ENCODE measurements at regions of chr4 and their contacts with region 1.

Region 1: GRCh38 chr4:54233277-54233696 is 4.2 kb downstream of the PDGFRA start:
- DNase-seq: peak; percentile 40
- ATAC-seq: peak; percentile 90
- H3K4me3 ChIP-seq: peak overlapping the region; percentile 28 to 48
- H3K27ac ChIP-seq: no peak overlapping the region
- H3K4me1 ChIP-seq: peaks cover 0 to 18% of the 10 kb centered on the region in 2 experiments; a peak in 3 of 4 replicates
- H3K27me3 ChIP-seq: no peaks in the 10 kb centered on the region
- CTCF ChIP-seq: peak; percentile 66 to 84 (median 72)
- POLR2A ChIP-seq: no peak
- RAD21 ChIP-seq: peak; percentile 88

Region 2: DNA sequence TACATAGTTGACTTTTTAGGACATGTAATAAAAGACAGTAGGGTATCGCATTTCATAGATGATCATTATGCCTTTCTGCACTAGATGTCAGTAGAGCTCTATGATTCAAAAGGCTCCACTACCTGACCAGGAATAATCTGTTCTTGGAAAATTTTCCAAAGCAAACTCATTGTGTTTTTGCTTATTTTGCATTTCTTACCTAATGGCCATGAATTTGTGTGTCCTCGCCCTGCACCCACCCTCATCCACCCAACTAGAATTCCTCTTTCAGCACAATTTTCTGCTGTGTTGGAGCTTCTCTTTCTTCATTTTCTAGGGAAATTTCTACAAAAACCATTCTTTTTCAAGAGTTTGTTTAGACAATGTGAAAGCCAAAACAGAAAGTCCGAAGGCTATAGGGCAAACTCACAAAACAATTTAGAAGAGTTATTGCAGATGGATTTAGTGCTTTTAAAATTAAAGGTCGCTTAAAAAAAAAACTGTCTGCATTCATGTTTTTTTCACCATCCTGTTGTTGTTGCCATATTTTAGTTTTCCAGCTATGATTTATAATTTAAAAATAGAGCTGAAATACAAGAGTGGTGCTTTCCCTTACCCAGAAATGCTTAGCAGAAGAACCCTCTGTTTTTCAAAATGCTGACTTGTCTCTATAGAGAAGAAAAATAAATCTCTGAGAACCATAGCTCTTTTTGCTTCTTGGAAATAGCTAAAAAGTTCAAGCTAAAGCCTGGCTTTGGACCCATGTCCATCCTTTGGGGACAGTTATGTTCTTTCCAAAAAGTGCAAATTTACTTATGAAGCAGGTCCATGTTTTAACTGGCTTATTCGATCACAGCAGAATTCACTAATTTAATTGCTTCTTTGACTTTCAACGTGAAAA is 1998.5 kb before region 1 on chr4:
- CTCF ChIA-PET with region 1: interaction called, 21 read pairs
- POLR2A ChIA-PET with region 1: no interaction called
- RAD21 ChIA-PET with region 1: interaction called in 1 of 2 experiments, 3 read pairs
- intact Hi-C with region 1: loop called (anchors 2 kb)
- DNase-seq: peak; percentile 41
- ATAC-seq: peak; percentile 89
- H3K4me3 ChIP-seq: no peak overlapping the region
- H3K27ac ChIP-seq: no peak overlapping the region
- H3K4me1 ChIP-seq: peaks cover 0 to 2% of the 10 kb centered on the region in 2 experiments; a peak in 1 of 4 replicates
- H3K27me3 ChIP-seq: peaks cover 19% of the 10 kb centered on the region
- CTCF ChIP-seq: peak; percentile 35 to 66 (median 51); a peak in 4 of 6 replicates
- POLR2A ChIP-seq: no peak
- RAD21 ChIP-seq: peak; percentile 79

Region 3: DNA sequence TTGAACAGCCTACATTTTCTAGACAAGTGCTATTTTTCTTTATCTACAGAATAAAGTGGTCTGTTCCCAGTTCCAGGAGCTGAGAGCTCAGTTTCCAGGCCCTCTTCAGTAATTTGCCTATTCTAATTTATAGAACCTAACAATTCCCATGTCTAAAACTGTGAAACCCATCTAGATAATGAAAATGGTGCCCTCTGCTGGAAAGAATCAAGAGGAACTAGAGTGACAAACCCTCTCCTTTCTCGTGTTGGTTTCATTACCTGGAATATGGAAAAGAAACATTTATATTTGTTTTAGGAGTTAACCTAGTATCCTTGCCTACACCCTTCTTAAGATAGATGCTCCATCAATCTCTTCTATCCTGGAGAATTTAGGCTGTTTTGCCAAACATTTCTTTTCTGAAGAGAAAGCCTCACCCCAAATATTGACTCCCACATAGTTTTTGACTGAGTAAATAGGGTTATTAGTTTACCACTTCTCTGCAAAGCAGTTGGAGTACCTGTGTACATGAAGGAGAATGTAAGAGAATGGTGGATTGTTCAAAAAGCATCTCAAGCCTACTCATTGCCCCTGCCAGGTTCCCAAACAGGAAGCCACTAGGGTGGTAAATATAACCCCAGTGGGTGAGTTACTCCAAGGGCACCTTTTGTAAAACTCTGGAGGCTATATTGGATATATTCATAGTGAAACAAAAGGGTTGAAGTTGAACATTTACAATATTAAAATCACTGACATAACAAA is 1249.6 kb before region 1 on chr4:
- CTCF ChIA-PET with region 1: interaction called, 25 read pairs
- POLR2A ChIA-PET with region 1: no interaction called
- RAD21 ChIA-PET with region 1: no interaction called
- intact Hi-C with region 1: loop called (anchors 10 kb)
- DNase-seq: peak; percentile 50
- ATAC-seq: peak; percentile 81
- H3K4me3 ChIP-seq: no peak overlapping the region
- H3K27ac ChIP-seq: no peak overlapping the region
- H3K4me1 ChIP-seq: peaks cover 2 to 4% of the 10 kb centered on the region in 2 experiments; a peak in 1 of 4 replicates
- H3K27me3 ChIP-seq: no peaks in the 10 kb centered on the region
- CTCF ChIP-seq: peak; percentile 45 to 68 (median 60); a peak in 5 of 6 replicates
- POLR2A ChIP-seq: no peak
- RAD21 ChIP-seq: peak; percentile 69

Region 4: DNA sequence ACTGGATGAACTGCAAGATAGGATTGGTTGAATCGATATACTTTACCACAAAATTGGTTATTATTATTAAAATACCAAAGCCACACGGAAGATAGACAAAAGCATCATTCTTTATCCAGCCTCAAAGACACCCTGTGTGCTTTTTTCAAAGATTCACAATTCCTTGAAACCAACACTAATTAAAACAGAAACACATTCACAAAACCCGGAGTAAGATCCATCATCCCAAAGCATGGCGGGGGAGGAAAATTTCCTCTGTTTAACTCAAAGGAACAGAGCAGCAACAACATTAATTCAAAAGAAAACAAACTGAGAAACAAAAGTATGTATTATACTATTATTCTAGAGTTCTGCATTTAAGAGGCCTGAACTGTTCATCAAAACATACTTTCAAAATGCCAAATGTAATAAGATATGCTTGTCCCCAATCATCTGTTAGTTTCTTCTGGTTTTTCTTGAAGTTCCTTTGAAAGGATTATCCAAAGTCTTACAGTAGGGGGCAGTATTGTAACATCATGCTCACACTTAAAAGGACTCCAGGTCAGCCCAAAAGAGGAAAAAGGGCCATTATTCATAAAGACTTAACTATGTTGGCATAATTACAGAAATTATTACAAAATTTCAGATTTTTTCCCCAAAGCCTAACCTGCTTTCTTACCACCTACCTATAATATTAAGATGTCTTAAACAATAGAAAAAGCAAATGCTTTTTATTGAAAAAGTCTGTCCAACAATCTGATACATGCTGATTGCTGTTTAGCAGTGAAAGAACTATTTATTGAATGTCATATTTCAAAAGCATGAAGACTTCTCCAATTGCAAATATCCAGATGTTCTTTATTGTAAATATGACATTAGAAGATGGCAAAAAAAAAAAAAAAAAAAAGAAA is 1036.2 kb before region 1 on chr4:
- CTCF ChIA-PET with region 1: interaction called, 13 read pairs
- POLR2A ChIA-PET with region 1: no interaction called
- RAD21 ChIA-PET with region 1: interaction called in 1 of 2 experiments, 4 read pairs
- intact Hi-C with region 1: loop called (anchors 1 kb)
- DNase-seq: peak; percentile 70
- ATAC-seq: peak; percentile 76
- H3K4me3 ChIP-seq: no peak overlapping the region
- H3K27ac ChIP-seq: no peak overlapping the region
- H3K4me1 ChIP-seq: no peaks in the 10 kb centered on the region
- H3K27me3 ChIP-seq: no peaks in the 10 kb centered on the region
- CTCF ChIP-seq: peak; percentile 61 to 81 (median 65); a peak in 5 of 6 replicates
- POLR2A ChIP-seq: no peak
- RAD21 ChIP-seq: peak; percentile 81

Region 5: GRCh38 chr4:53490965-53491622 is 742.2 kb before region 1 on chr4:
- CTCF ChIA-PET with region 1: interaction called, 5 read pairs
- POLR2A ChIA-PET with region 1: no interaction called
- RAD21 ChIA-PET with region 1: interaction called in 1 of 2 experiments, 3 read pairs
- intact Hi-C with region 1: loop called (anchors 2 kb)
- DNase-seq: peak; percentile 27
- ATAC-seq: peak; percentile 63; the same call in 1 of the 2 replicates
- H3K4me3 ChIP-seq: no peak overlapping the region
- H3K27ac ChIP-seq: no peak overlapping the region
- H3K4me1 ChIP-seq: peaks cover 0 to 6% of the 10 kb centered on the region in 2 experiments; a peak in 1 of 4 replicates
- H3K27me3 ChIP-seq: peaks cover 2% of the 10 kb centered on the region; the same call in 1 of the 2 replicates
- CTCF ChIP-seq: peak; percentile 26 to 76 (median 71); a peak in 5 of 6 replicates
- POLR2A ChIP-seq: no peak
- RAD21 ChIP-seq: peak; percentile 41

Region 6: DNA sequence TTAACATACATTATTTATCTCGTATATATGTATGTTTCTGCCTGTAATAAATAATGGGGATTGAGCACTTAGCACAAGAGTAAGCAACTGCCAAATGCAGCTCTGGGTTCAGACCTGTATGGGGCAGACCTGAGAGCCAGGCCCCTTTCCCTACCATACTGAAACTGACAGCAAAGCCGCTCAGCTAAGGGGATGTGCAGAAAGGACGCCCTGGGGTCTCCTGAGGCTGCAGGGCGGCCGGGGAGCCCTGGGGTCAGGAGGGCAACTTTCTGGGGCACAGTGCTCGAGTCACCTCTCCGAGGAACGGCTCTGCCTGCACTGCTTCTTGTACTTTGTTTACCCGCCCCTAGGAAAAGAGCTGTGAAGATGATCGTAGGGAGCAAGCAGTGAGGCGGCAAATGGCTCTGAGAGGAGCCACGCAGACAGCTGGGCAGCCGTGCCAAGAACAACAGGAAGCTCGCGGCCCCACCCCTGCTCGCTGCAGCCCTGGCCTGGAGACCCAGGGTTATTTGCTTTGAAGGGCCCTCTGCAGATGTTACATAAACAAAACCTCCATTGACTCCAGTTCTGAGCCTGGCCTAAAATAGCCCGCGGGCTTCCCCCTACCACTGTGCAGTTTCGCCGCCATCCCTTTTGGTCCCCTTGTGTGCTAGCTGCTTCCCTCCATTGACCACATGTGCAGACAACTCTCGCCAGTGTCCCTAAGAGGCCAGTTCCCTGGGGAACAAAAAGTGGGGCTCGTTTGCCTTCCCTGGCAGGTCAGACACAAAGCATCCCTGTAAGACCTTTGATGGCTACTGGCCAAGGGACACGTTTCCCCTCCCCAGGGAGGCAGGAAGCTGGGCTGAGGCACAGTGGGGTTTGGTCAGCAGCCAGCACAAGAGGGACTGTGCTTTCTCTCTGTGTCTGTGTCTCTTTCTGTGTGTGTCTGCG is 530.7 kb before region 1 on chr4:
- CTCF ChIA-PET with region 1: interaction called, 30 read pairs
- POLR2A ChIA-PET with region 1: interaction called, 4 read pairs
- RAD21 ChIA-PET with region 1: interaction called, 4 to 5 read pairs
- intact Hi-C with region 1: loop called (anchors 2 kb)
- DNase-seq: no peak
- ATAC-seq: peak; percentile 75
- H3K4me3 ChIP-seq: peak overlapping the region; percentile 21 to 38
- H3K27ac ChIP-seq: no peak overlapping the region
- H3K4me1 ChIP-seq: peaks cover 12 to 15% of the 10 kb centered on the region in 2 experiments
- H3K27me3 ChIP-seq: no peaks in the 10 kb centered on the region; the same call in 1 of the 2 replicates
- CTCF ChIP-seq: peak in 1 of 3 experiments; percentile 22; a peak in 2 of 6 replicates
- POLR2A ChIP-seq: no peak
- RAD21 ChIP-seq: no peak

Region 7: DNA sequence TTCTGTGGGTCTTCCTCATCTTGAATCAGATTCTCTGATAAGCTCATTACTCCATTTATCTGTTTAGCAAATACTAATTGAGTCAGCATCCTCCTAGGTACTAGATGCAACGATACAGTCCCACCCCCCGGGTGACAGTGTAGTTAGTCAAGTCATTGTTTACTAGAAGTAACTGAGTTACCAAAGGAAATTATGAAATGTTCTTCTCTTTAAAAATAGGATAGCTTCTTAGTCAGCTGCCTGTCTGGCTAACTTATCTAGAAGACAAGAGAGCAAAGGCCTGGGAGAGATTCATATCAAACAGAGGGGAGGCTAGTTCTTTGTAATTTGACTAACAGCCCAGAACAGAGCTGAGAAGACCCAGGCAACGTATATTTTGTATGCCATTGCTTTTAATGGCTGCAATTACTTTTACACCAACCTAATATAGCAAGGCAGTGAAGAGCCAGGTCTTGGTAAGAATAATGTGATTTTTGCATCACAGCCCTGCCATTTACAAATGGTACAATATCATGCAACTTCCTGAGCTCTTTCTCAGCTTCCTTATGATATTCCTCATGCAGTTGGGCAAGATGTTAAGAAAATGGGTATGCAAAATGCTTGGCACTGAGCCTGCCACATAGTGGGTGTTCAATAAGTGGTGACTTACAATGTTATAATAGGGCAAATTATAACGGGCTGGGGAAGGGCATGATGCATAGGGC is 318.8 kb before region 1 on chr4:
- CTCF ChIA-PET with region 1: interaction called, 34 read pairs
- POLR2A ChIA-PET with region 1: no interaction called
- RAD21 ChIA-PET with region 1: interaction called, 3 to 4 read pairs
- intact Hi-C with region 1: no loop called
- DNase-seq: no peak
- ATAC-seq: no peak
- H3K4me3 ChIP-seq: no peak overlapping the region
- H3K27ac ChIP-seq: no peak overlapping the region
- H3K4me1 ChIP-seq: peaks cover 0 to 6% of the 10 kb centered on the region in 2 experiments; a peak in 2 of 4 replicates
- H3K27me3 ChIP-seq: no peaks in the 10 kb centered on the region
- CTCF ChIP-seq: no peak
- POLR2A ChIP-seq: no peak
- RAD21 ChIP-seq: no peak